Dendritic cell treated with granulocyte-macrophage colony-stimulating factor and Interleukin-4, amounts not matched to agents 40 ng/mL and 50 ng/mL, for 4 days (primary cell): ENCODE measurements at regions of chr2 and their contacts with region 1.

Region 1: DNA sequence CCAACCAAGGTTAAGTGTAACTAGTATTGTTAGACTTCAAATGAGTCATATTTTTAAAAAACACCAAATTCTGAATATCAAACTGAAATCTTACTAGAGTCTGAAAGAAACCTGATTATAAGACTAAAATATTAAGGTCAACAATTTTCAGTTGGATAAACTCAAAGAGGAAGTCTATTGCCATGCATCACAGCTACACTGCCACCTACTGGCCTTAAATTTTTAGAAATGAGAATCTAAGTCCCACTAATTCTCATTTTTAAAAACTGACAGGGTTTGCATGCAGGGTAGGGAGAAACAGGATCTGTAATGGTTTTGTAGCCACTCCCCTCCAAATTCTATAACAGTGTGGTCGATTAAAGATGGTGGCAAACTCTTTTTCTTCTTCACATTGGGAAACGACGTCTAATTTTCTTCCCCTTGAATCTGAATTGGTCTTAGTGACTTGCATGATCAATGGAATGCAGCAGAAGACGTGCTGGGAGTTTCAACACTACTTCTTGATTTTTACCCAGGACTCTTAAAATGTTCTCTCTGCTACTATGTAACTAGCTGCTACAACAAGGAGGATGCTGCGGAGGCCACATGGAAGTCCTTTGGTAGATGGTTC is 176.1 kb upstream of the SESTD1 start:
- H3K4me3 Mint-ChIP-seq: no peak overlapping the region
- H3K27ac Mint-ChIP-seq: no peak overlapping the region
- H3K4me1 Mint-ChIP-seq: peaks cover 6% of the 10 kb centered on the region
- H3K27me3 Mint-ChIP-seq: no peaks in the 10 kb centered on the region

Region 2: DNA sequence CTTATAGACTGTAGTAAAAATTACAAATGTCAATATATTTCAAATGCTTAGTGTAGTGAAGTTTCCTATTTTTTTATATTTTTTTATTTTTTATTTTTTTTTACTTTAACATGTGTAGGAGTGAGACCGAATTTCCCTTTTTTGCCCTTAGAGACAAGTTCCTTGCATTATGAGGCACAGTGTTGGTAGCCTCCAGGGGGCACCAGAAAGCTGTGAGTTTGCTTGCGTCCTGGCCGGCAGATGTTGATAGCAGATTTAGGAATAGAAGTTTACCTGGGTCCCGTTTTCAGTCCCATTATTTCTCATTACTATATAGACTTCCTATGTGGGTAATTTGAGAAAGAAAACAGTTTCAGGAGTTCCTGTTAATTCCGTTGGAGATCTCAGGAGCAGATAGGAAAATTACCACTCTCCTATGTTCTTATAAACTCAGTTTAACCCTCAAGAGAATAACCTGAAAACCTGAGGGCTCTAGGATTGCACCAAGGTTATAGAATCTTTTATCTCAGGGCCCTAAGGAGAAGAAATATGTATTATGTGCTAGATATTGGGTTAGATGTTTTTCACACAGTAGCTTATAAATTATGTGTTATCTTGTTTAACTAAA is 18.6 kb before region 1 on chr2:
- intact Hi-C with region 1: loop called (anchors 1 kb)
- H3K4me3 Mint-ChIP-seq: no peak overlapping the region
- H3K27ac Mint-ChIP-seq: no peak overlapping the region
- H3K4me1 Mint-ChIP-seq: no peaks in the 10 kb centered on the region
- H3K27me3 Mint-ChIP-seq: peaks cover 3% of the 10 kb centered on the region